ENCODE measurements at regions of chr5 and their contacts with region 1.

Region 1: DNA sequence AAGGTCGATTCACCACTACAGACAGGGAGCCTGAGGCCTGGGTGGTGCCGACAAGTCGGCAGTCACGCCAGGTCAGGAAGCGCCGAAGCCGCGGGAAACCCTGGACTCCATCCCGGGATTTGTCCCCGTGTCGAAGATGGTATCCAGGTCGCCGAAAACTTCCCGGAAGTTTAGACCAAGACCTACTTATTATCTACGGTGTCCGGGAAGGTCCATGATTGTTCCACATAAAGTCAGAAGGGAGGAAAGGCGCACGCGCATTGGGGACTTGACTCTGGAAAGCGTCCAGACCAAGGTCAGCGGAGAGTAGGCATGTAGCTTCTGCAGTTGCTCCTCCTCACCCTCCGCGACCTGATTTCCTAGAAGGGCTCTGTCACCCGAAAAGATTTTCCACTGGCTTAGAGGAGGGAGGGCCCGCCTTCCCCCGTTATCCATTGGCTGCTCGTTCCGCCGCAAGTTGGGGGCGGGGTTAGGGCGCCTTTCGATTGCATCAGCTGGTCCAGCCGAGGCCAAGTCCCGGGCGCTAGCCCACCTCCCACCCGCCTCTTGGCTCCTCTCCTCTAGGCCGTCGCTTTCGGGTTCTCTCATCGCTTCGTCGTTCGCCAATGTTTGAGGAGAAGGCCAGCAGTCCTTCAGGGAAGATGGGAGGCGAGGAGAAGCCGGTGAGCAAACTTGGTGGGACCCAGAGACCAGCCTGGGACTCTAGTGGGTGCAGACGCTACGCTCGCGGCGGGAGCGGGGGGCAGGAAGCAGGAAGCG is at the start of gene TARS1:
- DNase-seq: peak; percentile 80 to 94 (median 91)
- ATAC-seq: peak; percentile 94
- H3K4me3 ChIP-seq: peak within 1 kb of the TSS; percentile 96
- H3K4me3 Mint-ChIP-seq: no peak within 1 kb of the TSS
- H3K27ac ChIP-seq: peak within 1 kb of the TSS; percentile 90
- H3K27ac Mint-ChIP-seq: no peak within 1 kb of the TSS
- H3K4me1 ChIP-seq: peaks cover 15 to 16% of the 10 kb centered on the region in 2 donors
- H3K4me1 Mint-ChIP-seq: peaks cover 16 to 35% (median 29%) of the 10 kb centered on the region in 7 donors
- H3K27me3 ChIP-seq: no peaks in the 10 kb centered on the region
- H3K27me3 Mint-ChIP-seq: no peaks in the 10 kb centered on the region
- total RNA-seq, gene TARS1: 29.7 to 153 (median 87.0) TPM

Region 2: GRCh38 chr5:32174011-32174870 is 1266.4 kb before region 1 on chr5 and contains the start of gene GOLPH3:
- CTCF ChIA-PET with region 1: no interaction called
- POLR2A ChIA-PET with region 1: no interaction called
- intact Hi-C with region 1: loop called in 1 of 2 experiments (anchors 2 kb)
- DNase-seq: peak; percentile 87 to 96 (median 92)
- ATAC-seq: peak; percentile 94
- H3K4me3 ChIP-seq: peak within 1 kb of the TSS; percentile 87
- H3K4me3 Mint-ChIP-seq: peak within 1 kb of the TSS; percentile 85 to 100 (median 98)
- H3K27ac ChIP-seq: peak within 1 kb of the TSS; percentile 100
- H3K27ac Mint-ChIP-seq: peak within 1 kb of the TSS; percentile 94 to 99 (median 99)
- H3K4me1 ChIP-seq: peaks cover 5 to 8% of the 10 kb centered on the region in 2 donors
- H3K4me1 Mint-ChIP-seq: peaks cover 21 to 46% (median 34%) of the 10 kb centered on the region in 7 donors
- H3K27me3 ChIP-seq: no peaks in the 10 kb centered on the region
- H3K27me3 Mint-ChIP-seq: peaks cover 0 to 6% (median 3%) of the 10 kb centered on the region in 5 donors
- total RNA-seq, gene GOLPH3: 46.9 to 66.5 (median 60.1) TPM

Region 3: DNA sequence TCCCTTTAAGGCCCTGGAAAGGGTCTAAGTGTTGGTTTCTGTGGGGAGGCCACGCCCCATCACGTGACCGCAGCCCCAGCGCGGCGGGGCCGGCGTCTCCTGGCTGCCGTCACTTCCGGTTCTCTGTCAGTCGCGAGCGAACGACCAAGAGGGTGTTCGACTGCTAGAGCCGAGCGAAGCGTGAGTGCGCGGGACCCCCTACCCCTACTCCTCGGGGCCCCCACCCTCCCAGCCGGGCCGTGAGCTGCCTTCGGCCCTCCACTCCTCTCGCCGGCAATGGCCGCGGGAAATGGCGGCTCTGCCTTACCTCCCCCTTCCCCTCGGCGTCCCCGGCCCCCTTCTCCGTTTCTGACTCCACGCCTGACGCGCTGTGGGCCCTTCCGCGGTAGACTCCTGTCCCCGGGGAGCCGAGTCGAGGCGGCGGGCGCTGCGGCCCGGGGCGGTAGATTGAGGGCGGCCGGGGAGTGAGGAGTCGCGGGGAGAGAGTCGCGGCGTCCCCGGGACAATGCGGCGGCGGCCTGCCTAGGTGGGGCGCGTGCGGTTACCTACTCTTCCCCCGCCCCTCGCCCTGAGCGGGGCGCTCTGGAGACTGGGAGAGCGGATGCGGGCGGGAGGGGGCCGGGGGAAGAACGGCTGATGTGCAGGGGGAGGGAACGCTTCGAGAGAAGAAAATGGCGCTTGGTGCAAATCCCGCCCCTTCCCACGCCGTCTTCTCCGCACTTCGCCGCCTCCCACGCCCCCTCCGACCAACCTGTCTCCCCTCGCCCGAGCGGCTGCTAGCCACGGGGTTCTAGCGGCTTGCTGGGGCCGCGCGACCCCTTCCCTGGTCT is 855.0 kb before region 1 on chr5 and contains the start of gene SUB1:
- CTCF ChIA-PET with region 1: no interaction called
- POLR2A ChIA-PET with region 1: no interaction called
- intact Hi-C with region 1: loop called (anchors 5 to 10 kb)
- DNase-seq: peak; percentile 90 to 94 (median 93)
- ATAC-seq: peak; percentile 93
- H3K4me3 ChIP-seq: peak within 1 kb of the TSS; percentile 94
- H3K4me3 Mint-ChIP-seq: peak within 1 kb of the TSS; percentile 92 to 100 (median 98)
- H3K27ac ChIP-seq: peak within 1 kb of the TSS; percentile 100
- H3K27ac Mint-ChIP-seq: peak within 1 kb of the TSS; percentile 87 to 99 (median 98)
- H3K4me1 ChIP-seq: peaks cover 24 to 36% of the 10 kb centered on the region in 2 donors
- H3K4me1 Mint-ChIP-seq: peaks cover 42 to 72% (median 67%) of the 10 kb centered on the region in 7 donors
- H3K27me3 ChIP-seq: no peaks in the 10 kb centered on the region
- H3K27me3 Mint-ChIP-seq: peaks cover 0 to 2% (median 0%) of the 10 kb centered on the region in 5 donors
- total RNA-seq, gene SUB1: 187 to 388 (median 285) TPM

Region 4: GRCh38 chr5:33479311-33479710 is 38.6 kb after region 1 on chr5:
- CTCF ChIA-PET with region 1: no interaction called
- POLR2A ChIA-PET with region 1: no interaction called
- intact Hi-C with region 1: no loop called
- DNase-seq: no peak
- ATAC-seq: no peak
- H3K4me3 ChIP-seq: no peak overlapping the region
- H3K4me3 Mint-ChIP-seq: no peak overlapping the region
- H3K27ac ChIP-seq: no peak overlapping the region
- H3K27ac Mint-ChIP-seq: peak overlapping the region in 1 of 9 donors; percentile 18
- H3K4me1 ChIP-seq: no peaks in the 10 kb centered on the region
- H3K4me1 Mint-ChIP-seq: no peaks in the 10 kb centered on the region
- H3K27me3 ChIP-seq: no peaks in the 10 kb centered on the region
- H3K27me3 Mint-ChIP-seq: no peaks in the 10 kb centered on the region

Region 5: DNA sequence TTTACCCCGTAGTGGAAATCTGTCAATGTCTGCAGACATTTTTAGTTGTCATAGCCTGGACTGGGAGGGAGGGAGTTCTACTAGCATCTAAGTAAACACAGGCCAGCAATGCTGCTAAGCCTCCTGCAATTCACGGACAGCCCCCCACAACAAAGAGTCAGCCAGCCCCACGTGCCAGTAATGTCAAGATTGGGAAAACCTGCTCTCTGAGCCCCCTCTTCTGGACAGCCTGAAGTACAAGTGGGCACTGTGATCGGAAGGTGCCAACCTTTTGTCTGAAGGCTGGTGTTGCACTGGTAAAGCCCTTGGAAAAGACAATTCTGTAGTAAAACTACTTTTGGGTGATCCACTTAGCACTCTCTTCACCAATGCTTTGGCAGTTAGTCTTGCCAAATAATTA is 154.6 kb after region 1 on chr5:
- CTCF ChIA-PET with region 1: no interaction called
- POLR2A ChIA-PET with region 1: no interaction called
- intact Hi-C with region 1: loop called in 1 of 2 experiments (anchors 2 kb)
- DNase-seq: no peak
- ATAC-seq: no peak
- H3K4me3 ChIP-seq: no peak overlapping the region
- H3K4me3 Mint-ChIP-seq: no peak overlapping the region
- H3K27ac ChIP-seq: no peak overlapping the region
- H3K27ac Mint-ChIP-seq: no peak overlapping the region
- H3K4me1 ChIP-seq: no peaks in the 10 kb centered on the region
- H3K4me1 Mint-ChIP-seq: peaks cover 0 to 1% (median 0%) of the 10 kb centered on the region in 7 donors
- H3K27me3 ChIP-seq: no peaks in the 10 kb centered on the region
- H3K27me3 Mint-ChIP-seq: peaks cover 0 to 17% (median 11%) of the 10 kb centered on the region in 5 donors

Region 6: GRCh38 chr5:33675958-33676464 is 235.3 kb after region 1 on chr5:
- CTCF ChIA-PET with region 1: no interaction called
- POLR2A ChIA-PET with region 1: no interaction called
- intact Hi-C with region 1: no loop called
- DNase-seq: no peak
- ATAC-seq: no peak
- H3K4me3 ChIP-seq: no peak overlapping the region
- H3K4me3 Mint-ChIP-seq: no peak overlapping the region
- H3K27ac ChIP-seq: no peak overlapping the region
- H3K27ac Mint-ChIP-seq: no peak overlapping the region
- H3K4me1 ChIP-seq: no peaks in the 10 kb centered on the region
- H3K4me1 Mint-ChIP-seq: no peaks in the 10 kb centered on the region
- H3K27me3 ChIP-seq: no peaks in the 10 kb centered on the region
- H3K27me3 Mint-ChIP-seq: peaks cover 0 to 8% (median 4%) of the 10 kb centered on the region in 5 donors

Region 7: GRCh38 chr5:33969572-33970452 is 529.2 kb after region 1 on chr5:
- CTCF ChIA-PET with region 1: interaction called, 12 read pairs
- POLR2A ChIA-PET with region 1: no interaction called
- intact Hi-C with region 1: loop called (anchors 1 kb)
- DNase-seq: peak in 4 of 9 donors; percentile 8 to 30 (median 15)
- ATAC-seq: peak; percentile 49
- H3K4me3 ChIP-seq: no peak overlapping the region
- H3K4me3 Mint-ChIP-seq: no peak overlapping the region
- H3K27ac ChIP-seq: no peak overlapping the region
- H3K27ac Mint-ChIP-seq: no peak overlapping the region
- H3K4me1 ChIP-seq: peaks cover 0 to 5% of the 10 kb centered on the region in 2 donors
- H3K4me1 Mint-ChIP-seq: peaks cover 4 to 22% (median 16%) of the 10 kb centered on the region in 7 donors
- H3K27me3 ChIP-seq: no peaks in the 10 kb centered on the region
- H3K27me3 Mint-ChIP-seq: no peaks in the 10 kb centered on the region

Region 8: GRCh38 chr5:34474573-34475021 is 1033.9 kb after region 1 on chr5:
- CTCF ChIA-PET with region 1: no interaction called
- POLR2A ChIA-PET with region 1: no interaction called
- intact Hi-C with region 1: loop called in 1 of 2 experiments (anchors 5 kb)
- DNase-seq: peak in 5 of 9 donors; percentile 10 to 27 (median 24)
- ATAC-seq: peak; percentile 71
- H3K4me3 ChIP-seq: no peak overlapping the region
- H3K4me3 Mint-ChIP-seq: no peak overlapping the region
- H3K27ac ChIP-seq: no peak overlapping the region
- H3K27ac Mint-ChIP-seq: no peak overlapping the region
- H3K4me1 ChIP-seq: no peaks in the 10 kb centered on the region
- H3K4me1 Mint-ChIP-seq: peaks cover 0 to 10% (median 0%) of the 10 kb centered on the region in 7 donors
- H3K27me3 ChIP-seq: no peaks in the 10 kb centered on the region
- H3K27me3 Mint-ChIP-seq: peaks cover 0 to 18% (median 7%) of the 10 kb centered on the region in 5 donors

Region 9: GRCh38 chr5:34929150-34929719 is 1488.6 kb after region 1 on chr5 and contains the start of gene DNAJC21:
- CTCF ChIA-PET with region 1: no interaction called
- POLR2A ChIA-PET with region 1: no interaction called
- intact Hi-C with region 1: loop called (anchors 1 kb)
- DNase-seq: peak; percentile 93 to 99 (median 97)
- ATAC-seq: peak; percentile 93
- H3K4me3 ChIP-seq: peak within 1 kb of the TSS; percentile 75
- H3K4me3 Mint-ChIP-seq: peak within 1 kb of the TSS; percentile 94 to 99 (median 96)
- H3K27ac ChIP-seq: peak within 1 kb of the TSS; percentile 93
- H3K27ac Mint-ChIP-seq: peak within 1 kb of the TSS; percentile 86 to 98 (median 94)
- H3K4me1 ChIP-seq: peaks cover 15 to 18% of the 10 kb centered on the region in 2 donors
- H3K4me1 Mint-ChIP-seq: peaks cover 19 to 44% (median 36%) of the 10 kb centered on the region in 7 donors
- H3K27me3 ChIP-seq: no peaks in the 10 kb centered on the region
- H3K27me3 Mint-ChIP-seq: no peaks in the 10 kb centered on the region
- total RNA-seq, gene DNAJC21: 43.9 to 66.4 (median 49.6) TPM

Measured in naive thymus-derived CD4-positive, alpha-beta T cell (primary cell).